ENCODE measurements at regions of chr10 and their contacts with region 1.

Region 1: GRCh38 chr10:11986593-11987216 is 55.9 kb downstream of the UPF2 start:
- DNase-seq: peak; percentile 88
- H3K4me3 ChIP-seq: no peak overlapping the region
- H3K27ac ChIP-seq: no peak overlapping the region
- H3K4me1 ChIP-seq: no peaks in the 10 kb centered on the region
- H3K27me3 ChIP-seq: no peaks in the 10 kb centered on the region

Region 2: GRCh38 chr10:11782793-11783557 is 203.7 kb before region 1 on chr10:
- in situ Hi-C with region 1: loop called (anchors 10 kb)
- DNase-seq: peak; percentile 61
- H3K4me3 ChIP-seq: no peak overlapping the region
- H3K27ac ChIP-seq: no peak overlapping the region
- H3K4me1 ChIP-seq: no peaks in the 10 kb centered on the region
- H3K27me3 ChIP-seq: peaks cover 7% of the 10 kb centered on the region; the same call in 1 of the 2 replicates

Region 3: GRCh38 chr10:12435348-12435747 is 448.6 kb after region 1 on chr10:
- in situ Hi-C with region 1: no loop called
- DNase-seq: no peak
- H3K4me3 ChIP-seq: no peak overlapping the region
- H3K27ac ChIP-seq: no peak overlapping the region
- H3K4me1 ChIP-seq: no peaks in the 10 kb centered on the region
- H3K27me3 ChIP-seq: peaks cover 35% of the 10 kb centered on the region

Region 4: DNA sequence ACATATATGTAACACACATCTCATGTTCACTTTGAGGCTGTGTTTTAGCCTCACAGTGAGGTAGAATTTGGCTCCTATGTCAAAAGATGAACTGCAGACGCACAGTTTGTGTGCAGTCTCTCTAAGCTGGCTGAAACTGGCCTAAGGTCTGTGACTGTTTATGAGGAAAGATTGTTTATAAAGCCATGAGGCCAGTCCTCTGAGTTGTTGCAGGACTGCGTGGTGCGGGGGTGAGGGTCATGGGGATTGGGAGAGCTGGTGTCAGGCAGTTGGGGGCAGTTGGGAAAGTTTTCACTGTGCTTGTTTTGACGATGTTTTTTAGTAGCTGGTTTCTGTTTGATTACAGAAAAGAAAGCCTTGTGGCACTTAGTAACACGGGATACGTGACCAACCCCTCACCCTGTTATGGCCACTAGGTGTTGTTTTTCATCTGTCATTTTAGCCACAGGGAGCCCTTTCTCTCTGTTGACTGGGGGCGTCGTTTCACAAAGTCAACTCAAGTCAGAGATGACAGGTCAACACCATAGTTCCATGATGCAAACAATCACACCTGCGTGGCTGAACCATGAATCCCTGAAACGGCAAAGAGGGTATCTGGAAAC is 703.9 kb after region 1 on chr10:
- in situ Hi-C with region 1: no loop called
- DNase-seq: no peak
- H3K4me3 ChIP-seq: no peak overlapping the region
- H3K27ac ChIP-seq: no peak overlapping the region
- H3K4me1 ChIP-seq: no peaks in the 10 kb centered on the region
- H3K27me3 ChIP-seq: peaks cover 8% of the 10 kb centered on the region; the same call in 1 of the 2 replicates